GM12878 (cell line): ENCODE measurements at regions of chr1 and their contacts with region 1.

Region 1: GRCh38 chr1:205335643-205336091 is 14.1 kb upstream of the NUAK2 start:
- DNase-seq: no peak
- ATAC-seq: peak; percentile 87
- H3K4me3 ChIP-seq: no peak overlapping the region
- H3K27ac ChIP-seq: no peak overlapping the region
- H3K4me1 ChIP-seq: peaks cover 6% of the 10 kb centered on the region; the same call in 1 of the 2 replicates
- H3K27me3 ChIP-seq: peaks cover 7 to 18% of the 10 kb centered on the region in 2 experiments
- CTCF ChIP-seq: peak; percentile 98 to 99 (median 99); a peak in 5 of 6 replicates
- EP300 ChIP-seq: no peak
- POLR2A ChIP-seq: no peak
- RAD21 ChIP-seq: peak; percentile 69

Region 2: DNA sequence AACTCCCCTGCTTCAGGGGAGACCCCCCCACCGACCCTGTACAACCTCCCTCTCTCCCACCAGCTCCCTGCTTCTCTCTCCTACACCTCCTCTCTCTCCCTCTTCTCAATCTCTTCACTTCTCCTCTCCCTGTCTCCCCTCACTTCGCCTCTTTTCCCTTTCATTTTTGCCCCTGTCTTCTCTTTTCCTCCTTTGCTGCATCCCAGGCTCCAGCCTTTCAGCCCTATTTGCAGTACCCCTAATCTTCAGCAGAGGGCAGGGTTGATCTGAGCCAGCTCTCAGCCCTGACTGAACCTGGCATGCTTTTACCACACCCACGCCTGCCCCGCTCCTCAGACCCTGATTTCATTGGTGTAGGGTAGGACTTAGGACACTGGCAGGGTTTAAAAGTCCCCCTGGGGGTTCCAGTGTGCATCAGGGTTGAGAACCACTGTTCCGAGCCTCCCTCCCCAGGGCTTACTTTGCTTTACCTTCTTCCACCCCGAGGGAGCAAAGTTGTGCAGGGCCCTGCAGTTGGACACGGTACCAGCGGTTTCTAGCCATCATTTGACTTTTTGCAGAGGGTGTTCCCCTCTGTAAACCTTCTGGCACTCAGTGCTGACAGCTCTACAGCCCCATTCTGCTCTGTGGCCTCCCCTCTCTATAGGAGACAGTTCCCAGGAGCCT is 360.0 kb before region 1 on chr1:
- CTCF ChIA-PET with region 1: no interaction called
- POLR2A ChIA-PET with region 1: no interaction called
- RAD21 ChIA-PET with region 1: no interaction called
- SMC1A ChIA-PET with region 1: no interaction called
- in situ Hi-C with region 1: no loop called
- intact Hi-C with region 1: loop called (anchors 10 kb)
- DNase-seq: no peak
- ATAC-seq: peak; percentile 90
- H3K4me3 ChIP-seq: no peak overlapping the region
- H3K27ac ChIP-seq: no peak overlapping the region
- H3K4me1 ChIP-seq: peaks cover 6% of the 10 kb centered on the region
- H3K27me3 ChIP-seq: peaks cover 0 to 5% of the 10 kb centered on the region in 2 experiments; a peak in 3 of 4 replicates
- CTCF ChIP-seq: peak; percentile 84 to 89 (median 88)
- EP300 ChIP-seq: no peak
- POLR2A ChIP-seq: no peak
- RAD21 ChIP-seq: peak; percentile 79

Region 3: DNA sequence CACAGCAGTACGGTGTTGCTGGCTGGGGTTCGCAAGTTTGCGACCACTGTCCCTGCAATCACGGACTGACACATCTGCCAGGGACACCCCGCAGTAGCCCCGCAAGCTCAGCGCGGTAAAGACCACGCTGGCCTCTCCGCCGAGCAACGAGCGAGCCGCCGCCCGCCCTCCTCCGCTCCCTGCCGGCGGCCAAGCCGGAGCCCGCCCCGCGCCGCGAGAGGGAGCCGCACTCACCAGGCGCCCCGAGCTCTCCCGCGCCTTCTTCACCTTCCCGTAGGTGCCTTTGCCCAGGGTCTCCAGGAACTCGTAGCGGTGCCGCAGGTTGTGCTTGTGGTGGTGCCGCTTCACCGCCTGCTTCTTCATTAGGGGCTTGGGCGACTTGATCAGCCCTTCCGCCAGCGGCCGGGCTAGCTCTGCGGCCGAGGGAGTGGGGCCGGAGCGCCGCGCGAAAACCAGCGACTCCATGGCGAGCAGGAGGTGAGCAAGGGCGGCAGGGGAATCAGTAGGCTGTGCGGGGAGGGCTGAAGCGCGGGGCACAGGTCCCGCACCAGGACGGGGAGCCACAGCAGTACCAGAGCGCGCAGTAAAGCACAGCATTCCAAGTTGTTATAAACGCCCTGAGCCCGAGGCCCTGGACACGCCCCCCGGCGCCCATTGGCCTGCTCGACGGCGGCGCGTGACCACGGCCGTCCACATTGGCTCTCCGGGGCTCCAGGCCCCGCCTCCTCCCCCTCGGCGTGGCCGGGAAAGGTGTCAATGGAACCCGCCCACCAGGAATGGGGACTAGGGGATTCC is 14.3 kb before region 1 on chr1 and contains the start of gene NUAK2:
- CTCF ChIA-PET with region 1: interaction called, 70 read pairs
- POLR2A ChIA-PET with region 1: no interaction called
- RAD21 ChIA-PET with region 1: interaction called, 19 read pairs
- SMC1A ChIA-PET with region 1: interaction called, 17 read pairs
- in situ Hi-C with region 1: no loop called
- intact Hi-C with region 1: no loop called
- DNase-seq: no peak
- ATAC-seq: peak; percentile 85
- H3K4me3 ChIP-seq: peak within 1 kb of the TSS; percentile 36; the same call in 1 of the 2 replicates
- H3K27ac ChIP-seq: no peak within 1 kb of the TSS
- H3K4me1 ChIP-seq: peaks cover 13% of the 10 kb centered on the region
- H3K27me3 ChIP-seq: peaks cover 0 to 8% of the 10 kb centered on the region in 2 experiments; a peak in 3 of 4 replicates
- CTCF ChIP-seq: peak in 1 of 3 experiments; percentile 21; a peak in 1 of 6 replicates
- EP300 ChIP-seq: no peak
- POLR2A ChIP-seq: peak; percentile 44; the same call in 1 of the 2 replicates
- RAD21 ChIP-seq: peak; percentile 9; the same call in 1 of the 2 replicates
- polyA plus RNA-seq, gene NUAK2: 0.27 to 0.31 TPM

Region 4: DNA sequence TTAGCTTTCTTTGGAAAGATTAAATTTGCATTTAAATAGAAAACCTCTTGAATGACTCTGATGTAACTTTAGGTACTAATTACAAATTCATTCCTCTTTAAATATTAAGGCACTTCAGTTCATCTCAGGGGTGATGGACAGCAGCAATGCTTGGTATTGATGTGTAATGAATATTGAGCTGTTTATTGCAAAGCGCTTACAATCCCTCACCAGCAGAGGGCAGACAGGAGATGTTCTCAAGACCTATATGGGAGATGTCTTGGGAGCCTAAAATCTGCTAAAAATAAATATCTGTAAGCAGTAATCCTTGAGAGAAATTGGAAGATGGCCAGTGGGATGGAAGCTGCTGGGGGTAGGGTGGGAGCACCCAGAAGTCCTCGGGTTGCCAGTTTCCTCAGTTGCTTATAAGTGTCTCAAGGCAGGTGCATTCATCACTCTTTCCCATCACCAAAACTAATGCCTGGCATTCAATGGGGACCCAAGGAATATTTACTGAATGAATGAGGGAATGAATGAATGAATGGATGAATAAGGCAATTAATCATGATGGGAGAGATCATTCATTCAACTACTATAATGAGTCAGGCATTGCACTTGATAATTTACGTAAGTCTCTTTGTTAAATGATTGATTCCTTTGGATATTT is 18.7 kb after region 1 on chr1:
- CTCF ChIA-PET with region 1: interaction called, 74 read pairs
- POLR2A ChIA-PET with region 1: no interaction called
- RAD21 ChIA-PET with region 1: interaction called, 14 read pairs
- SMC1A ChIA-PET with region 1: interaction called, 21 read pairs
- in situ Hi-C with region 1: no loop called
- intact Hi-C with region 1: no loop called
- DNase-seq: peak; percentile 9
- ATAC-seq: peak; percentile 91
- H3K4me3 ChIP-seq: no peak overlapping the region
- H3K27ac ChIP-seq: no peak overlapping the region
- H3K4me1 ChIP-seq: no peaks in the 10 kb centered on the region
- H3K27me3 ChIP-seq: peaks cover 0 to 4% of the 10 kb centered on the region in 2 experiments; a peak in 3 of 4 replicates
- CTCF ChIP-seq: peak; percentile 74 to 83 (median 83)
- EP300 ChIP-seq: no peak
- POLR2A ChIP-seq: no peak
- RAD21 ChIP-seq: peak; percentile 69

Region 5: DNA sequence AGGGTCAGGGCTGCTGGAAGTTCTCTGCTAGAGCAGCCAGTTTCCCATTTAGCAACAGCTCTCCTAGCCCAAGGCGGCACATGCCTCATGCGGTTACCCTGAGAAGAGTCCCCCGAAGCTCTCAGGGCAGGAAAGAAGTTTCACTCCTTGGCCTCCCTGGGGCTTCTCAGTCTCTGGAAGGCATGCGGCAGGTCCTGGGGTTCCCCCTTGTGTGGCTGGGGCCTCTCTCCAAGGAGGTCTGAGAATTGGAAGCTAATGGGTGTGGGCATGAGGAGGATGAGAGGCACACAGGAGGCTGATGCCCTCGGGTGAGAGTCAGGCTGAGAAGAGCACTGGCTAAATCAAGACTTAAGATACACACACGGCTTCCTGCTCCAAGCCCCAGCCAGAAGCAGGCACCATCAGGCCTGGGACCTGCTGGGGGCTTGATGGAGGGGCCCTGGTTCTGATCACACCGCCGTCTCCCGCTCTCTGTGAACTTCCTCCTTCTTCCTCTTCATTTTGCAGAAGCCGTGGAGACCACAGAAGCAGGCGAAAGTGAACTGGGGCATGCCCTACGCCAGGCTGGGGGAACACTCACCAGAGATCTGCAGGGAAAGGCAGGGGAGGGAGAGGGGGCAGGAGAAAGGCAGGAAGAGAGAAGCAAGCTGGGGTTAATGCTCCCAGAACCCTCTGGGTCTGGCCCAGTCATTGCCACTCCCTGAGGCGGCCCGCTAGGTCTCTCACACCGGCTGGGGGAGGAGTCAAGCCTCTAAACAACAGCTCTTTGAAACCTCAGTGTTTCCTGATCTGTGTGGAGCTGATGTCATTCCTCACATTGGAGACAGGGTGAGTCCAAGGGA is 105.0 kb after region 1 on chr1:
- CTCF ChIA-PET with region 1: interaction called, 8 read pairs
- POLR2A ChIA-PET with region 1: no interaction called
- RAD21 ChIA-PET with region 1: no interaction called
- SMC1A ChIA-PET with region 1: no interaction called
- in situ Hi-C with region 1: no loop called
- intact Hi-C with region 1: loop called (anchors 5 kb)
- DNase-seq: peak; percentile 47
- ATAC-seq: peak; percentile 92
- H3K4me3 ChIP-seq: peak overlapping the region; percentile 60; the same call in 1 of the 2 replicates
- H3K27ac ChIP-seq: peak overlapping the region; percentile 59
- H3K4me1 ChIP-seq: peaks cover 20% of the 10 kb centered on the region
- H3K27me3 ChIP-seq: no peaks in the 10 kb centered on the region; a peak in 1 of 4 replicates
- CTCF ChIP-seq: no peak
- EP300 ChIP-seq: no peak
- POLR2A ChIP-seq: peak; percentile 55; the same call in 1 of the 2 replicates
- RAD21 ChIP-seq: no peak

Region 6: DNA sequence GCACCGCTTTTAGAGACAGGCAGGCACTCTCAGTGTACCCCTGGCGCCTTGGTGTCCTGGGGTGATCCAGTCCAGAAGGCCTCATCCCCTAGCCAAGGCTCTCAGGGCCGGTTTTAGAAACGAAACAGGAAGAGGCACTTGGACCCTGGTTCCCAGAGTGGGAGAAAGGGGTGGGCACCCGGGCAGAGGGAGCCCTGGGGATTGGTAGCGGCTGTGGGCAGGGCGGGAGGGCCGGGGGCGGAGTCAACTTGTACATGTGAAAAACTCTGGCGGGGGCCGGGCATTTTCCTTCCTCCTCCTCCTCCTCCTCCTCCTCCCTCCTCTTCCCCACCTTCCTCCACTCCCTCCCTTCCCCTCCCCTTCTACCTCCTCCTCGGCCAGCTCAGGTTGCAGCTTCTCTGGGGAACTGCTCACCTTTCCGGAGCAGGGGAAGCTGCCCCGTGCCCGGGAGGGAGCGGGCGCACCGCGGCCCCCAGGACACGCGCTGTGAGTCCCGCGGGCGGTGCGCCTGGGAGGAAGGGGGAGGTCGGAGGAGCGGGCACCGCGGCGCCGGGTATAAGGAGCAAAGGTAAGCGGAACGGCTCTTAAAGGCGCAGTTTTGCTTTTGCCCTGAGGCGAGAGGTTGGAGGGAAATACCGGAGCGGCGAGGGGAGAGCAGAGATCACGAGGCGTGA is 168.8 kb after region 1 on chr1 and contains the start of gene CDK18:
- CTCF ChIA-PET with region 1: interaction called, 3 read pairs
- POLR2A ChIA-PET with region 1: no interaction called
- RAD21 ChIA-PET with region 1: interaction called, 3 read pairs
- SMC1A ChIA-PET with region 1: no interaction called
- in situ Hi-C with region 1: no loop called
- intact Hi-C with region 1: loop called (anchors 5 kb)
- DNase-seq: no peak
- ATAC-seq: peak; percentile 80
- H3K4me3 ChIP-seq: peak within 1 kb of the TSS; percentile 71
- H3K27ac ChIP-seq: no peak within 1 kb of the TSS
- H3K4me1 ChIP-seq: 0 out of 2 replicates have a peak, but pooled peaks cover 4% of the 10 kb centered on the region
- H3K27me3 ChIP-seq: peaks cover 0 to 5% of the 10 kb centered on the region in 2 experiments; a peak in 3 of 4 replicates
- CTCF ChIP-seq: no peak
- EP300 ChIP-seq: no peak
- POLR2A ChIP-seq: no peak
- RAD21 ChIP-seq: no peak
- polyA plus RNA-seq, gene CDK18: not detected